CD8-positive, alpha-beta T cell (primary cell): ENCODE measurements at regions of chr22 and their contacts with region 1.

Region 1: GRCh38 chr22:28800308-28801077 is at the start of gene XBP1:
- DNase-seq: peak; percentile 78 to 95 (median 87)
- ATAC-seq: peak; percentile 87
- H3K4me3 ChIP-seq: peak within 1 kb of the TSS; percentile 79 to 99
- H3K4me3 Mint-ChIP-seq: peak within 1 kb of the TSS; percentile 84
- H3K27ac ChIP-seq: peak within 1 kb of the TSS; percentile 85 to 97
- H3K27ac Mint-ChIP-seq: peak within 1 kb of the TSS; percentile 98
- H3K4me1 ChIP-seq: peaks cover 42% of the 10 kb centered on the region
- H3K4me1 Mint-ChIP-seq: peaks cover 49% of the 10 kb centered on the region
- H3K27me3 ChIP-seq: no peaks in the 10 kb centered on the region
- H3K27me3 Mint-ChIP-seq: no peaks in the 10 kb centered on the region
- CTCF ChIP-seq: no peak
- total RNA-seq, gene XBP1: 207 to 212 TPM

Region 2: DNA sequence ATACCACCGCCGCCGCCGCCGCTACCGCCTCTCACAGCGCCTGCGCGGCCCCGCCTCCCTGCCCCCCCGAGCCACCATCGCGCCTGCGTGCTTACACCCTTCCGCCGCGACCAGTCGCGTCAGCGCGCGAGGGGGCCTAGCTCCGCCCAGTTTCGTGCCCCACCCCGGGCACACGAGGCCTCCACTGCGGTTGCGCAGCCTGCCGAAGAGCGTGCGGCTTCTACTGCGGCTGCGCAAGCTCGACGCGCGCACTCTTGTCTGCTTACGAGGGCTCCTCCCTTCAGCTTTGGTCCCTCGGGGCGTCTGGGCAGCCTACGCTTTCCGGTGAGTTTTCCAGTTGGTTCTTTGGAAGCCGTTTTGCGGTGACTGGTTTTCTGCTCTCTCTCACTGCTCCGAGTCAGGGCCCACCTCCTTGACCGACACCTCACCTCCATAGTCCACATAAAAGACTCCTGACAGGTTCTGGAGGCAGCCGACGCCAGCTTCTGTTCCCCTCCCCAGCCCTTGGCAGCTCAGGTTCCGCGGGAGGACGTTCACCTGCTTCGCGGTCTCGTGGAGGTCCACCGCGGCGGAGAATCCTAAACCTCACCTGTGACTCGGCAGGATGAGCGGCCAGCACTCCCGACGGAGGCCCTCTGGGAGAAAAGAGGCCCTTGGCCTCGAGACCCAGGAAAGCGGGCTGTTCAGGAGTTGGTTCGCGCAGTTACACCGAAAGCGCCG is 881.1 kb before region 1 on chr22 and contains the start of gene PITPNB:
- CTCF ChIA-PET with region 1: no interaction called
- POLR2A ChIA-PET with region 1: no interaction called
- intact Hi-C with region 1: loop called (anchors 10 kb)
- DNase-seq: peak; percentile 98 to 100 (median 99)
- ATAC-seq: peak; percentile 89
- H3K4me3 ChIP-seq: peak within 1 kb of the TSS; percentile 66 to 82
- H3K4me3 Mint-ChIP-seq: peak within 1 kb of the TSS; percentile 98
- H3K27ac ChIP-seq: peak within 1 kb of the TSS; percentile 87 to 98
- H3K27ac Mint-ChIP-seq: peak within 1 kb of the TSS; percentile 99
- H3K4me1 ChIP-seq: peaks cover 25% of the 10 kb centered on the region
- H3K4me1 Mint-ChIP-seq: peaks cover 68% of the 10 kb centered on the region
- H3K27me3 ChIP-seq: no peaks in the 10 kb centered on the region
- H3K27me3 Mint-ChIP-seq: no peaks in the 10 kb centered on the region
- CTCF ChIP-seq: no peak
- total RNA-seq, gene PITPNB: 40.8 to 41.5 TPM

Region 3: GRCh38 chr22:28741758-28742561 is 58.5 kb before region 1 on chr22 and contains the starts of genes CHEK2 and HSCB:
- CTCF ChIA-PET with region 1: no interaction called
- POLR2A ChIA-PET with region 1: interaction called, 7 read pairs
- intact Hi-C with region 1: loop called (anchors 1 kb)
- DNase-seq: peak; percentile 94 to 99 (median 96)
- ATAC-seq: peak; percentile 94
- H3K4me3 ChIP-seq: peak within 1 kb of the TSS; percentile 85 to 98
- H3K4me3 Mint-ChIP-seq: peak within 1 kb of the TSS; percentile 88
- H3K27ac ChIP-seq: peak within 1 kb of the TSS; percentile 82 to 94
- H3K27ac Mint-ChIP-seq: peak within 1 kb of the TSS; percentile 92
- H3K4me1 ChIP-seq: peaks cover 13% of the 10 kb centered on the region
- H3K4me1 Mint-ChIP-seq: peaks cover 22% of the 10 kb centered on the region
- H3K27me3 ChIP-seq: no peaks in the 10 kb centered on the region
- H3K27me3 Mint-ChIP-seq: no peaks in the 10 kb centered on the region
- CTCF ChIP-seq: no peak
- total RNA-seq, gene CHEK2: 2.1 to 3.6 TPM
- total RNA-seq, gene HSCB: 4.8 to 5.9 TPM

Region 4: DNA sequence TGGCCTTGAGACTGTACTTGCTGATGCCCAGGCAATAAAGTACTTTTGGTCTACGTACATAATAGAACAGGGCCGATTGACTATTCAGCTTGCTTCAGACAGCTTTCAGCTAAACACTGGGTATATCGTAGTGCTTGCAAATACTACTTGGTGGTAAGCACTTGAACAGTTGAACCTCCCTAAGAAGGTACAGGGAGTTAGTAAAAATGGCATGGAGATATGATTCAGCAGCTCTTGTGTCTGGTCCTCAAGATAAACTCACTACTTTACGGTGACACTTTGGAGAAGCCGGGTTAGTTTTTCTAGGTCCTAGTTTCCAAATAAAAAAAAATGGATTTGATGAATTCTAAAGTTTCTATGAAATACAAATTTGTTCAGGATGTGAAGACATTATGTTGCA is 20.7 kb before region 1 on chr22:
- CTCF ChIA-PET with region 1: interaction called, 3 read pairs
- POLR2A ChIA-PET with region 1: interaction called, 34 read pairs
- intact Hi-C with region 1: no loop called
- DNase-seq: no peak
- ATAC-seq: no peak
- H3K4me3 ChIP-seq: no peak overlapping the region
- H3K4me3 Mint-ChIP-seq: no peak overlapping the region
- H3K27ac ChIP-seq: no peak overlapping the region
- H3K27ac Mint-ChIP-seq: no peak overlapping the region
- H3K4me1 ChIP-seq: peaks cover 22% of the 10 kb centered on the region
- H3K4me1 Mint-ChIP-seq: peaks cover 33% of the 10 kb centered on the region
- H3K27me3 ChIP-seq: no peaks in the 10 kb centered on the region
- H3K27me3 Mint-ChIP-seq: no peaks in the 10 kb centered on the region
- CTCF ChIP-seq: no peak

Region 5: GRCh38 chr22:28817919-28818909 is 17.7 kb after region 1 on chr22:
- CTCF ChIA-PET with region 1: interaction called, 8 read pairs
- POLR2A ChIA-PET with region 1: interaction called, 106 read pairs
- intact Hi-C with region 1: no loop called
- DNase-seq: peak in 1 of 9 experiments; percentile 25
- ATAC-seq: no peak
- H3K4me3 ChIP-seq: no peak overlapping the region
- H3K4me3 Mint-ChIP-seq: no peak overlapping the region
- H3K27ac ChIP-seq: no peak overlapping the region
- H3K27ac Mint-ChIP-seq: no peak overlapping the region
- H3K4me1 ChIP-seq: peaks cover 64% of the 10 kb centered on the region
- H3K4me1 Mint-ChIP-seq: peaks cover 70% of the 10 kb centered on the region
- H3K27me3 ChIP-seq: no peaks in the 10 kb centered on the region
- H3K27me3 Mint-ChIP-seq: no peaks in the 10 kb centered on the region
- CTCF ChIP-seq: no peak

Region 6: GRCh38 chr22:29267858-29268417 is 467.4 kb after region 1 on chr22 and contains the starts of genes EWSR1 and RHBDD3:
- CTCF ChIA-PET with region 1: no interaction called
- POLR2A ChIA-PET with region 1: no interaction called
- intact Hi-C with region 1: loop called in 1 of 2 experiments (anchors 5 kb)
- DNase-seq: peak; percentile 92 to 99 (median 96)
- ATAC-seq: peak; percentile 85
- H3K4me3 ChIP-seq: peak within 1 kb of the TSS; percentile 87 to 100
- H3K4me3 Mint-ChIP-seq: peak within 1 kb of the TSS; percentile 95
- H3K27ac ChIP-seq: peak within 1 kb of the TSS; percentile 98 to 100
- H3K27ac Mint-ChIP-seq: peak within 1 kb of the TSS; percentile 97
- H3K4me1 ChIP-seq: peaks cover 50% of the 10 kb centered on the region
- H3K4me1 Mint-ChIP-seq: peaks cover 56% of the 10 kb centered on the region
- H3K27me3 ChIP-seq: no peaks in the 10 kb centered on the region
- H3K27me3 Mint-ChIP-seq: no peaks in the 10 kb centered on the region
- CTCF ChIP-seq: no peak
- total RNA-seq, gene EWSR1: 326 to 352 TPM
- total RNA-seq, gene RHBDD3: 10.2 to 10.9 TPM